Activated CD4-positive, alpha-beta T cell treated with anti-CD3 and anti-CD28 coated beads, Interleukin-2, amount 10 ng/mL, durations not matched to agents 24 days and 14 days (primary cell): ENCODE measurements at regions of chr1 and their contacts with region 1.

Region 1: GRCh38 chr1:20212685-20213331 is 26.5 kb upstream of the PLA2G2C start:
- DNase-seq: peak; percentile 84
- H3K4me3 Mint-ChIP-seq: no peak overlapping the region
- H3K27ac Mint-ChIP-seq: no peak overlapping the region
- H3K4me1 Mint-ChIP-seq: peaks cover 6% of the 10 kb centered on the region
- H3K27me3 Mint-ChIP-seq: peaks cover 45% of the 10 kb centered on the region

Region 2: DNA sequence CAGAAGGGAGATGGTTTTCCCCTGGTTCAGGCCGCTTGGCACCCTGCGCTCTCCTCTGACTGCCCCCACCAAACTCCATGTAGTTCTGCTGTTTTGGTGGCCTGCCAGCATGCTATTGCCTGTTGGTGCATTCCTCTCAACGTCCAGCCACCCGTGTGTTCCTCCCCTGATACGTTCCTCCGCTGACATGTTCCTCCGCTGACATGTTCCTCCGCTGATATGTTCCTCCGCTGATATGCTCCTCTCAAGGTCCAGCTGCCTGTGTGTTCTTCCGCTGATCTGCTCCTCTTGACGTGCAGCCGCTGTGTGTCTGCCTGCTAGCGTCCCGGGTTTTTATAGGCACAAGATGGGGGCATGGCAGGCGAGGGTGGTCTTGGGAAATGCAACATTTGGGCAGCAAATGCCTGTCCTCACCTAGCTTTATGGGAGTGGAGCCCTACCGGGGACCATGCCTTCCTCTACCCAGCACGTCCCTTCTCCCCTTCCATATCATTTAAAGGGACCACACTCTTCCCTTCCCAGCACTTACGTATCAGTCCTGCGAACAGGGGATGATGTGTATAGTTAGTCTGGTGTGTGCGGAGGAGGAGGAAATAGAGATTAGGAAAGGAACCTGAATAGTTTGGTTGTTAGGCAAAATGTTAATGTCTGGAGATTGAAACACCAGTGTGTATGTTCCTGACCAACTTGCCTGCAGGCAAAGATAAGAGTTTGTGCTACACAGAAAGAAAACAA is 183.5 kb before region 1 on chr1:
- intact Hi-C with region 1: no loop called
- DNase-seq: no peak
- H3K4me3 Mint-ChIP-seq: no peak overlapping the region
- H3K27ac Mint-ChIP-seq: no peak overlapping the region
- H3K4me1 Mint-ChIP-seq: no peaks in the 10 kb centered on the region
- H3K27me3 Mint-ChIP-seq: peaks cover 14% of the 10 kb centered on the region

Region 3: DNA sequence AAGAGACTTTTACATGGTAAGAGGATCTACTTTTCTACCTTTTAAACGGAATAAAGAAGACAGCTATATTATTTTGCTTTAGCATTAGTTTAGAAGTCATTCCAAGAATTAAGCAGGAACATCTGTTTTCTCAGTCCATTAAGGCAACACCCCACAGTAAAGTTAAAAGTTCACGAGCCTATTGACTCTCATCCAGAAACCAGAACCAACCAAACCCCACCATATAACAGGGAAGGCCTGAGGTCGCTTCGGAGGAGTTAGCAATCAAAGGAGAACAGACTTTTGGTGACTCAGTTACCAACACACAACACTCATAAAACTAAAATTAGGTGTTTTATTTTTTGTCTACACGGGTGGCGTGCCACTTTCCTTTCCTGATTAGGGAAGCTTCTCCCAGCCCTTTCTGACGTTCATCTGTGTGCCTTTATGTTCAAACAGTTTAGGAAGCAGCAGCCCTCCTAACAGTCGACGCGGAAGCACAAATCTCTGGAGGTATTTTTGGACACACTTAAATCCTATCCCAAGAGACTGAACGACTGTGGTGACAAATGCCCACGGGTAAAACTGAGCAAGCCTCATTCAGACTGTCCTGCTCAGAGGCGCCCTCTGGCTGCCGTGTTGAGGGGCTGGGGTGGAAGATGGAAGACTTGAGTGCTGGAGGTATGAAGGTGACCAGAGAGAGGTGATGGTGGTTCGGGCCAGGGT is 17.9 kb before region 1 on chr1:
- intact Hi-C with region 1: no loop called
- DNase-seq: peak; percentile 93
- H3K4me3 Mint-ChIP-seq: no peak overlapping the region
- H3K27ac Mint-ChIP-seq: no peak overlapping the region
- H3K4me1 Mint-ChIP-seq: peaks cover 6% of the 10 kb centered on the region
- H3K27me3 Mint-ChIP-seq: peaks cover 45% of the 10 kb centered on the region

Region 4: GRCh38 chr1:20302093-20302471 is 89.3 kb after region 1 on chr1:
- intact Hi-C with region 1: no loop called
- DNase-seq: no peak
- H3K4me3 Mint-ChIP-seq: no peak overlapping the region
- H3K27ac Mint-ChIP-seq: no peak overlapping the region
- H3K4me1 Mint-ChIP-seq: no peaks in the 10 kb centered on the region
- H3K27me3 Mint-ChIP-seq: peaks cover 13% of the 10 kb centered on the region

Region 5: GRCh38 chr1:20376880-20377494 is 164.2 kb after region 1 on chr1:
- intact Hi-C with region 1: loop called (anchors 10 kb)
- DNase-seq: peak; percentile 87
- H3K4me3 Mint-ChIP-seq: no peak overlapping the region
- H3K27ac Mint-ChIP-seq: no peak overlapping the region
- H3K4me1 Mint-ChIP-seq: peaks cover 3% of the 10 kb centered on the region
- H3K27me3 Mint-ChIP-seq: peaks cover 18% of the 10 kb centered on the region